Common myeloid progenitor, CD34-positive (primary cell): ENCODE measurements at regions of chr5 and their contacts with region 1.

Region 1: DNA sequence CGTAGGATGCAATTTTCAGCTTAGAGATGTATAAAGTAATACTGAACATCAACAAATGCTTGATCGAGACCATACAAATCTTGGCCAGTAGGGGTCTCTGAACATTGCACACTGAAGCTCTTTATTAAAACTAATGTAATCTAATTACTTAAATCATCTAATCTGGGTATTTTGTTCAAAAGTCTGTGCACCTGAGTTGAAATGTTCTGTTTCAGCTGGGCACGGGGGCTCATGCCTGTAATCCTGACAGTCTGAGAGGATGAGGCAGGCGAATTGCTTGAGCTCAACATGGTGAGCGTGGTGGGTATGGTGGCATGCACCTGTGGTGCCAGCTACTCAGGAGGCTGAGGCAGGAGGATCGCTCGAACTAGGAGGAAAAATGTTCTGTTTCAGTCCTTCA is 41.0 kb downstream of the ESM1 start:
- DNase-seq: peak; percentile 47 to 72 (median 65)
- H3K4me3 ChIP-seq: no peak overlapping the region
- H3K27ac ChIP-seq: no peak overlapping the region
- H3K4me1 ChIP-seq: no peaks in the 10 kb centered on the region
- H3K27me3 ChIP-seq: no peaks in the 10 kb centered on the region

Region 2: GRCh38 chr5:54905943-54906537 is 38.3 kb before region 1 on chr5:
- CTCF ChIA-PET with region 1: interaction called, 12 read pairs
- POLR2A ChIA-PET with region 1: no interaction called
- DNase-seq: peak; percentile 59 to 80 (median 73)
- H3K4me3 ChIP-seq: no peak overlapping the region
- H3K27ac ChIP-seq: no peak overlapping the region
- H3K4me1 ChIP-seq: peaks cover 3 to 27% (median 8%) of the 10 kb centered on the region in 4 experiments
- H3K27me3 ChIP-seq: peaks cover 0 to 9% (median 4%) of the 10 kb centered on the region in 5 experiments

Region 3: GRCh38 chr5:54959673-54960418 is 15.5 kb after region 1 on chr5:
- CTCF ChIA-PET with region 1: interaction called, 21 read pairs
- POLR2A ChIA-PET with region 1: no interaction called
- DNase-seq: peak; percentile 17 to 43 (median 42)
- H3K4me3 ChIP-seq: no peak overlapping the region
- H3K27ac ChIP-seq: no peak overlapping the region
- H3K4me1 ChIP-seq: no peaks in the 10 kb centered on the region
- H3K27me3 ChIP-seq: no peaks in the 10 kb centered on the region

Region 4: GRCh38 chr5:55030676-55031369 is 86.5 kb after region 1 on chr5:
- CTCF ChIA-PET with region 1: no interaction called
- POLR2A ChIA-PET with region 1: no interaction called
- DNase-seq: no peak
- H3K4me3 ChIP-seq: no peak overlapping the region
- H3K27ac ChIP-seq: no peak overlapping the region
- H3K4me1 ChIP-seq: peaks cover 6 to 26% (median 16%) of the 10 kb centered on the region in 4 experiments
- H3K27me3 ChIP-seq: no peaks in the 10 kb centered on the region

Region 5: DNA sequence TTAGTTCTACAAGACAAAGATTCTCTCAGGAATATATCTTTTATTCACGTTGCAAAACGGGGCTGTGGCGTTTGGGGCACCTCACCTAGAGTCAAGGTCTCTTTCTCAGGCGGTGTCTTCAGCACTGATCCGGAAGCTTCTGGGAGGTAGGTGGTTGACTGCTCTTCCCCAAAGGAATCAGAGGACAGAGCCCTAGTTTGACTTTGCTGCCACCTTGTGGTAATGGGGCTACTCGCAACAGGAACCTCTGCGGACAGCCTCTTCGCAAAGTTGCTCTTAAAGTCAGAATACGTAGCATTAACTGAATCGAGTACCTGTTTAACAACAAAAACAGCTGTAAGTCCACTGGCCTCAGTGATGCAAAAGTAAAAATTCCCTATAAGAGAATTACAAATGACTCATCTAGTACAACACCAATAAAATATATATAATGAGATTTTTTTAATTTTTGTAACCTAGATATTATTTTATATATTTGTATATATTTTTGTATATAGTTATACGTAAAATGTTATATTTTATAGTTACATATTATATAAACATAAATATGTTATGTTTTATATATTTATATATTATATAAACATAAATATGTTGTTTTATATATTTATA is 202.3 kb after region 1 on chr5:
- CTCF ChIA-PET with region 1: interaction called, 21 read pairs
- POLR2A ChIA-PET with region 1: no interaction called
- DNase-seq: peak; percentile 84 to 90 (median 86)
- H3K4me3 ChIP-seq: no peak overlapping the region
- H3K27ac ChIP-seq: no peak overlapping the region
- H3K4me1 ChIP-seq: peaks cover 0 to 5% (median 2%) of the 10 kb centered on the region in 4 experiments
- H3K27me3 ChIP-seq: peaks cover 0 to 3% (median 0%) of the 10 kb centered on the region in 5 experiments

Region 6: GRCh38 chr5:55151923-55152842 is 207.8 kb after region 1 on chr5:
- CTCF ChIA-PET with region 1: interaction called, 21 read pairs
- POLR2A ChIA-PET with region 1: no interaction called
- DNase-seq: no peak
- H3K4me3 ChIP-seq: no peak overlapping the region
- H3K27ac ChIP-seq: no peak overlapping the region
- H3K4me1 ChIP-seq: no peaks in the 10 kb centered on the region
- H3K27me3 ChIP-seq: peaks cover 0 to 6% (median 4%) of the 10 kb centered on the region in 5 experiments

Region 7: DNA sequence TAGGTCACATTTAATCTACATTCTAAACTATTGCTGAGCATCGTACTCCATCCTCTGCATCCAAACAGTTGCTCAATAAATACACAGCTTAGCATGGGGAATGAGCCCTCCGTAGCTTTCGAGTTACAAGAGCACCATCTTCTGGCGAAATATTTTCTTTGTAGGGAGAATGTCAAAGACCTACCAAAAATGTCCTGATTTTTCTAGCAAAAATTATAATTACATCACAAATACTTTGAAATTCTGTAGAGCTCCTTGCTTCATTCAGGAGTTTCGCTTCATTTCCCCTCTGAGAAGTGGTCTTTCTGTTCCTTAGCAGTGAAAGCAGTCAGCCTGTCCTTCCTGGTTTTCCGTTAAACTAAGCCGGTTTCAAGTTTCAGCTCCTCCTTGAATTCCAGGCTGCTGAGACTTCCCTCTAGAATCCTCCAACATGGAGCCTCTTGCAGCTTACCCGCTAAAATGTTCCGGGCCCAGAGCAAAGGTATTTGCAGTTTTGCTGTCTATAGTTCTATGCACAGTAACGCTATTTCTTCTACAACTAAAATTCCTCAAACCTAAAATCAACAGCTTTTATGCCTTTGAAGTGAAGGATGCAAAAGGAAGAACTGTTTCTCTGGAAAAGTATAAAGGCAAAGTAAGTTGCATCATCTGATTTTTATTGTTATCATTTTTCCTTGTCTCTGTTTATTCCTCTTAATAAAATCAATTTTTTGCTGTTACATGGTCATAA is 215.6 kb after region 1 on chr5 and contains the start of gene GPX8:
- CTCF ChIA-PET with region 1: interaction called, 21 read pairs
- POLR2A ChIA-PET with region 1: no interaction called
- DNase-seq: peak; percentile 44 to 71 (median 64)
- H3K4me3 ChIP-seq: peak within 1 kb of the TSS in 1 of 7 experiments; percentile 49
- H3K27ac ChIP-seq: no peak within 1 kb of the TSS
- H3K4me1 ChIP-seq: peaks cover 0 to 5% (median 1%) of the 10 kb centered on the region in 4 experiments
- H3K27me3 ChIP-seq: peaks cover 0 to 17% (median 8%) of the 10 kb centered on the region in 5 experiments